CD4-positive, alpha-beta T cell (primary cell): ENCODE measurements at regions of chr6 and their contacts with region 1.

Region 1: DNA sequence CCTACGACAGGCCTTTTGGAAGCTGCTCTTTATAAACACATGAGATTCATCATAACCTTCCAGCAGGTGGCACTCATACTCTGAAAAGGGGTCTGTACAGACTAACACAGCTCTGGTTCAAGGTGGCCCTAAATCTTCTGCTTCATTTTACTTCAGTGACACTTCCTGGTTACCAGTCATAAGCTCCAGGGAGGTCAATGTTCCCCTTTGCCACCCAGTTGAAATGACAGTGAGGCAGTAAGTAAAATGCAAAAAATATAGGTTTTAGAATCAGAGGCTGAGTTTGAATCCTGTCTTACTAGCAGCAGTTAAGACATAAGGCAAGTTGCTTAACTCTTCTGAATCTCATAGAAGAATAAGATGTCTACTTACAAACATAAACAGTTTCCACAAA is 132.8 kb downstream of the CDK19 start:
- DNase-seq: peak in 12 of 14 experiments; percentile 21 to 88 (median 60)
- ATAC-seq: peak; percentile 99
- H3K4me3 ChIP-seq: no peak overlapping the region
- H3K4me3 Mint-ChIP-seq: no peak overlapping the region
- H3K27ac ChIP-seq: no peak overlapping the region
- H3K27ac Mint-ChIP-seq: no peak overlapping the region
- H3K4me1 ChIP-seq: peaks cover 10% of the 10 kb centered on the region
- H3K4me1 Mint-ChIP-seq: peaks cover 19% of the 10 kb centered on the region
- H3K27me3 ChIP-seq: no peaks in the 10 kb centered on the region
- H3K27me3 Mint-ChIP-seq: no peaks in the 10 kb centered on the region
- CTCF ChIP-seq: peak; percentile 86

Region 2: GRCh38 chr6:110949679-110950285 is 267.3 kb after region 1 on chr6:
- CTCF ChIA-PET with region 1: interaction called, 9 read pairs
- POLR2A ChIA-PET with region 1: interaction called, 4 read pairs
- intact Hi-C with region 1: loop called (anchors 1 kb)
- DNase-seq: peak in 3 of 14 experiments; percentile 60
- ATAC-seq: peak; percentile 41
- H3K4me3 ChIP-seq: no peak overlapping the region
- H3K4me3 Mint-ChIP-seq: no peak overlapping the region
- H3K27ac ChIP-seq: no peak overlapping the region
- H3K27ac Mint-ChIP-seq: no peak overlapping the region
- H3K4me1 ChIP-seq: no peaks in the 10 kb centered on the region
- H3K4me1 Mint-ChIP-seq: peaks cover 12% of the 10 kb centered on the region
- H3K27me3 ChIP-seq: no peaks in the 10 kb centered on the region
- H3K27me3 Mint-ChIP-seq: peaks cover 4% of the 10 kb centered on the region
- CTCF ChIP-seq: peak; percentile 66

Region 3: DNA sequence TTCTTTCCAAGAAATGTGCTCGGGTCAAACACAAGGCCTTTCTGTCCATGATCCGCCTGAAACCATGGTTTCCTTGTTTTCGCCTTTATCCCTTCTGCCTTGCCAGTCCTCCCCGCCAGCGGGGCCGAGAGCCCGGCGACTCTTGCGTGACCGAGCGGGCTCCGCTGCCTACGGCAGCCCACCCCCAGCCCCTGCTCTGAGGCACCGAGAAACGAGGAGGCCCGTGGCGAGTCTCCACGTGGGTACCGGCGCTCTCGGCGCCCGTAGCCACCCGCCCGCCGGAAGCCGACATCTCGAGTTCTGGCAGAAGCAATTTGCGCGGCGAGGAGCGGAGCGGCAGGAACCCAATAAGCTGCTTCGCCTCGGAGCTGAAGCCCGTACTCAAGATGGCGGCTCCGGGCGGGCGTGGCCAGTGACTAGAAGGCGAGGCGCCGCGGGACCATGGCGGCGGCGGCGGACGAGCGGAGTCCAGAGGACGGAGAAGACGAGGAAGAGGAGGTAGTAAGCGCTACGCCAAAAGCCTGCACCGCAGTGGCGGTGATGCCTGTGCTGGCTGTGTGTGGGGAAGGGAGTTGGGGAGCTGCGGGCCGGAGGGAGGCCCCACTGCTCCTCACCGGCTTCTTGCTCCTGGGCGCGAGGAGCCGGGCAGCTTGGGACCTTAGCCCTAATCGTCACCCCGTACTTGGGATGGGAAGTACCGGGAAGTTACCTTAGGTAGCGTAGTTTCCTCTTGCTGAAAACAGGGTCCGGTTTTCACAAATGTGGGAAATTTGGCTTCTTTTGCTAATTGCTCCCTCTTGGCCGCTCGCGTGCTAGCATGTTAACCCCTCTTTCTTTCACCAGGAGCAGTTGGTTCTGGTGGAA is 276.1 kb after region 1 on chr6 and contains the start of gene GTF3C6:
- CTCF ChIA-PET with region 1: interaction called, 19 read pairs
- POLR2A ChIA-PET with region 1: interaction called, 14 read pairs
- intact Hi-C with region 1: no loop called
- DNase-seq: peak; percentile 85 to 96 (median 90)
- ATAC-seq: peak; percentile 99
- H3K4me3 ChIP-seq: peak within 1 kb of the TSS; percentile 99
- H3K4me3 Mint-ChIP-seq: peak within 1 kb of the TSS; percentile 99
- H3K27ac ChIP-seq: peak within 1 kb of the TSS; percentile 84 to 90
- H3K27ac Mint-ChIP-seq: peak within 1 kb of the TSS; percentile 89
- H3K4me1 ChIP-seq: peaks cover 17% of the 10 kb centered on the region
- H3K4me1 Mint-ChIP-seq: peaks cover 25% of the 10 kb centered on the region
- H3K27me3 ChIP-seq: no peaks in the 10 kb centered on the region
- H3K27me3 Mint-ChIP-seq: peaks cover 2% of the 10 kb centered on the region
- CTCF ChIP-seq: no peak
- total RNA-seq, gene GTF3C6: 17.9 to 19.2 TPM

Region 4: GRCh38 chr6:110999634-111000270 is 317.3 kb after region 1 on chr6:
- CTCF ChIA-PET with region 1: interaction called, 7 read pairs
- POLR2A ChIA-PET with region 1: no interaction called
- intact Hi-C with region 1: loop called (anchors 1 to 2 kb)
- DNase-seq: peak in 3 of 14 experiments; percentile 47 to 56 (median 54)
- ATAC-seq: no peak
- H3K4me3 ChIP-seq: no peak overlapping the region
- H3K4me3 Mint-ChIP-seq: no peak overlapping the region
- H3K27ac ChIP-seq: no peak overlapping the region
- H3K27ac Mint-ChIP-seq: no peak overlapping the region
- H3K4me1 ChIP-seq: no peaks in the 10 kb centered on the region
- H3K4me1 Mint-ChIP-seq: no peaks in the 10 kb centered on the region
- H3K27me3 ChIP-seq: no peaks in the 10 kb centered on the region
- H3K27me3 Mint-ChIP-seq: no peaks in the 10 kb centered on the region
- CTCF ChIP-seq: peak; percentile 50

Region 5: DNA sequence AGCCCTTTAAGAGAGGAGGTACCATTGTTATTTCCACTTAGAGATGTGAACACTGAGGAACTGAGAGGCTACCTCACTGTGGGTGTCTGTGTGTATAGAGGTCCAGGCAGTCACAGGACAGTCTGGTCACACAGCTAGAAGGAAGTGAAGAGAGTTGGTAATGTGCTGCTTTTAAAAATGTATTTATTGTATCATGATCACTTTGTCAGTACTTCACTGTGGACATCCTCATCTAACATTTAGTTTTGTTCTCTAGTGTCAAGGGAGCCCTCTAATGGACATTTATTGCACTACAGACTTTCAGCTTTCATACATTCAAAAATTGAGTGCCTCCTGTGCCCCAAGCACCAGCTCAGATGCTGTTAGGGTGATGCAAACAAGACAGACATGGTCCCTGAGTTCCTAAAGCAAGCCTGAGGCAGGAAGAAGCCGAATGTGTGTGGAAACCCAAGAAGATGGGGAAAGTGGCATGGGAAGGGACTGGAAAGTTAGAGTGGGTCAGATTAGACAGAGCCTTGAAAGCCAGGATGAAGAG is 527.8 kb after region 1 on chr6:
- CTCF ChIA-PET with region 1: no interaction called
- POLR2A ChIA-PET with region 1: no interaction called
- intact Hi-C with region 1: loop called (anchors 1 to 5 kb)
- DNase-seq: peak in 5 of 14 experiments; percentile 9 to 76 (median 68)
- ATAC-seq: peak; percentile 83
- H3K4me3 ChIP-seq: no peak overlapping the region
- H3K4me3 Mint-ChIP-seq: no peak overlapping the region
- H3K27ac ChIP-seq: no peak overlapping the region
- H3K27ac Mint-ChIP-seq: no peak overlapping the region
- H3K4me1 ChIP-seq: no peaks in the 10 kb centered on the region
- H3K4me1 Mint-ChIP-seq: peaks cover 6% of the 10 kb centered on the region
- H3K27me3 ChIP-seq: no peaks in the 10 kb centered on the region
- H3K27me3 Mint-ChIP-seq: no peaks in the 10 kb centered on the region
- CTCF ChIP-seq: peak; percentile 82